ENCODE measurements at regions of chr1 and their contacts with region 1.

Region 1: GRCh38 chr1:22114083-22115012 is 28.5 kb downstream of the WNT4 start:
- DNase-seq: no peak
- H3K4me3 ChIP-seq: no peak overlapping the region
- H3K27ac ChIP-seq: peak overlapping the region; percentile 27 to 44
- H3K4me1 ChIP-seq: no peaks in the 10 kb centered on the region
- H3K27me3 ChIP-seq: no peaks in the 10 kb centered on the region
- CTCF ChIP-seq: no peak
- POLR2A ChIP-seq: no peak

Region 2: GRCh38 chr1:22416555-22417454 is 302.5 kb after region 1 on chr1:
- intact Hi-C with region 1: loop called (anchors 10 kb)
- DNase-seq: peak; percentile 74
- H3K4me3 ChIP-seq: no peak overlapping the region
- H3K27ac ChIP-seq: no peak overlapping the region
- H3K4me1 ChIP-seq: peaks cover 19% of the 10 kb centered on the region
- H3K27me3 ChIP-seq: no peaks in the 10 kb centered on the region
- CTCF ChIP-seq: peak; percentile 86 to 97 (median 94)
- POLR2A ChIP-seq: no peak

Measured in prostate gland (tissue), 2 donors.